ENCODE measurements at regions of chr12 and their contacts with region 1.

Region 1: GRCh38 chr12:121712461-121713256 is at the start of gene TMEM120B:
- DNase-seq: peak; percentile 71
- ATAC-seq: peak; percentile 90
- H3K4me3 ChIP-seq: peak within 1 kb of the TSS; percentile 75
- H3K27ac ChIP-seq: peak within 1 kb of the TSS; percentile 64
- H3K4me1 ChIP-seq: peaks cover 10% of the 10 kb centered on the region
- H3K27me3 ChIP-seq: no peaks in the 10 kb centered on the region
- CTCF ChIP-seq: no peak
- POLR2A ChIP-seq: peak; percentile 82
- RAD21 ChIP-seq: no peak
- total RNA-seq, gene TMEM120B: 9.2 and 10.6 TPM in 2 replicates

Region 2: DNA sequence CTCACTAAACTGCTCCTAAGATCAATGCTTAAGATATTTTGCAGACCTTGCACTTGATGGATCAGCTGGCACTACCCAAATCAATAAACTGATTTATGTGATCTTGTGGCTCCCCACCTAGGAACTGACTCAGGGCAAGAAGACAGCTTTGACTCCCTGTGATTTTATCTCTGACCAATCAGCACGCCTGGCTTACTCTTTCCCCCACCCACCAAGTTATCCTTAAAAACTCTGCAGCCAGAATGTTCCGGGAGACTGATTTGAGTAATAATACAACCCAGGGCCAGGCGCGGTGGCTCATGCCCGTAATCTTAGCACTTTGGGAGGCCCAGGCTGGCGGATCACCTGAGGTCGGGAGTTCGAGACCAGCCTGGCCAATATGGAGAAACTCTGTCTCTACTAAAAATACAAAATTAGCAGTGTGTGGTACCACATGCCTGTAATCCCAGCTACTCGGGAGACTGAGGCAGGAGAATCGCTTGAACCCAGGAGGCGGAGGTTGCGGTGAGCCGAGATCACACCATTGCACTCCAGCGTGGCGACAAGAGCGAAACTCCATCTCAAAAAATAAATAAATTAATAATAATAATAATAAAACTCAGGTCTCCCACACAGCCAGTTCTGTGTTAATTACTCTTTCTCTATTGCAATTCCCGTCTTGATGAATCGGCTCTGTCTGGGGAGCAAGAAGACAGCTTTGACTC is 55.2 kb before region 1 on chr12:
- CTCF ChIA-PET with region 1: no interaction called
- POLR2A ChIA-PET with region 1: no interaction called
- dilution Hi-C with region 1: no loop called
- in situ Hi-C with region 1: no loop called
- intact Hi-C with region 1: no loop called
- DNase-seq: no peak
- ATAC-seq: no peak
- H3K4me3 ChIP-seq: no peak overlapping the region
- H3K27ac ChIP-seq: no peak overlapping the region
- H3K4me1 ChIP-seq: no peaks in the 10 kb centered on the region; the same call in 1 of the 2 replicates
- H3K27me3 ChIP-seq: no peaks in the 10 kb centered on the region
- CTCF ChIP-seq: no peak
- POLR2A ChIP-seq: no peak
- RAD21 ChIP-seq: no peak

Region 3: GRCh38 chr12:121688966-121689365 is 23.7 kb before region 1 on chr12:
- CTCF ChIA-PET with region 1: no interaction called
- POLR2A ChIA-PET with region 1: no interaction called
- dilution Hi-C with region 1: no loop called
- in situ Hi-C with region 1: no loop called
- intact Hi-C with region 1: loop called (anchors 2 kb)
- DNase-seq: no peak
- ATAC-seq: no peak
- H3K4me3 ChIP-seq: no peak overlapping the region
- H3K27ac ChIP-seq: no peak overlapping the region
- H3K4me1 ChIP-seq: no peaks in the 10 kb centered on the region
- H3K27me3 ChIP-seq: peaks cover 2% of the 10 kb centered on the region; the same call in 1 of the 2 replicates
- CTCF ChIP-seq: no peak
- POLR2A ChIP-seq: no peak
- RAD21 ChIP-seq: no peak

Region 4: DNA sequence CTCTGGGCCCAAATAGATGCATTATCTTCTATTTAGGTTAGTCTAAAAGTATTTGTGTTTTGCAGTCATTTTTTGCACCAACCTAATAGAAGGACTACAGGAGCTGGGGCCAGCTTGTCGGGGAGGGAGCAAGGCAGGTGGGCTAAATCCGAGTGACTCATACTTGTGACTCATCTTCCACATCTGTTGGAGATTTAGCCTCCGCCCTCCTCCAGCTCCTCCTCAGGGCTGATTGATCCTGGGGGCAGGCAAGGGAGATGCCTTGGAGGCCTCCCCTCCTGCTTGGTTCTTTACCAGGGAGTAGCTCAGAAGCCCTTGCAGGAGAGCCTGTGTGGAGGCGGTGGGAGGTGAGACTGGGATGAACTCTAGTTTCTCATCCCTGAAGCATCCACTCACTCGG is 52.9 kb after region 1 on chr12:
- CTCF ChIA-PET with region 1: interaction called, 6 read pairs
- POLR2A ChIA-PET with region 1: no interaction called
- dilution Hi-C with region 1: no loop called
- in situ Hi-C with region 1: no loop called
- intact Hi-C with region 1: loop called (anchors 5 kb)
- DNase-seq: peak; percentile 97
- ATAC-seq: peak; percentile 79
- H3K4me3 ChIP-seq: no peak overlapping the region
- H3K27ac ChIP-seq: peak overlapping the region; percentile 35
- H3K4me1 ChIP-seq: peaks cover 30% of the 10 kb centered on the region
- H3K27me3 ChIP-seq: no peaks in the 10 kb centered on the region
- CTCF ChIP-seq: no peak
- POLR2A ChIP-seq: no peak
- RAD21 ChIP-seq: no peak

Region 5: GRCh38 chr12:122126713-122127597 is 414.3 kb after region 1 on chr12:
- CTCF ChIA-PET with region 1: no interaction called
- POLR2A ChIA-PET with region 1: no interaction called
- dilution Hi-C with region 1: no loop called
- in situ Hi-C with region 1: no loop called
- intact Hi-C with region 1: no loop called
- DNase-seq: no peak
- ATAC-seq: no peak
- H3K4me3 ChIP-seq: no peak overlapping the region
- H3K27ac ChIP-seq: no peak overlapping the region
- H3K4me1 ChIP-seq: peaks cover 7% of the 10 kb centered on the region; the same call in 1 of the 2 replicates
- H3K27me3 ChIP-seq: no peaks in the 10 kb centered on the region
- CTCF ChIP-seq: no peak; the same call in 1 of the 2 replicates
- POLR2A ChIP-seq: no peak
- RAD21 ChIP-seq: no peak

Measured in IMR-90 (cell line).